ENCODE measurements at regions of chr7 and their contacts with region 1.

Region 1: GRCh38 chr7:148698397-148699023 is at the start of gene CUL1:
- DNase-seq: peak; percentile 66
- ATAC-seq: peak; percentile 77
- H3K4me3 ChIP-seq: peak within 1 kb of the TSS; percentile 81
- H3K27ac ChIP-seq: peak within 1 kb of the TSS; percentile 65
- H3K4me1 ChIP-seq: peaks cover 33% of the 10 kb centered on the region
- H3K27me3 ChIP-seq: no peaks in the 10 kb centered on the region
- CTCF ChIP-seq: no peak
- total RNA-seq, gene CUL1: 38.0 and 43.6 TPM in 2 replicates

Region 2: DNA sequence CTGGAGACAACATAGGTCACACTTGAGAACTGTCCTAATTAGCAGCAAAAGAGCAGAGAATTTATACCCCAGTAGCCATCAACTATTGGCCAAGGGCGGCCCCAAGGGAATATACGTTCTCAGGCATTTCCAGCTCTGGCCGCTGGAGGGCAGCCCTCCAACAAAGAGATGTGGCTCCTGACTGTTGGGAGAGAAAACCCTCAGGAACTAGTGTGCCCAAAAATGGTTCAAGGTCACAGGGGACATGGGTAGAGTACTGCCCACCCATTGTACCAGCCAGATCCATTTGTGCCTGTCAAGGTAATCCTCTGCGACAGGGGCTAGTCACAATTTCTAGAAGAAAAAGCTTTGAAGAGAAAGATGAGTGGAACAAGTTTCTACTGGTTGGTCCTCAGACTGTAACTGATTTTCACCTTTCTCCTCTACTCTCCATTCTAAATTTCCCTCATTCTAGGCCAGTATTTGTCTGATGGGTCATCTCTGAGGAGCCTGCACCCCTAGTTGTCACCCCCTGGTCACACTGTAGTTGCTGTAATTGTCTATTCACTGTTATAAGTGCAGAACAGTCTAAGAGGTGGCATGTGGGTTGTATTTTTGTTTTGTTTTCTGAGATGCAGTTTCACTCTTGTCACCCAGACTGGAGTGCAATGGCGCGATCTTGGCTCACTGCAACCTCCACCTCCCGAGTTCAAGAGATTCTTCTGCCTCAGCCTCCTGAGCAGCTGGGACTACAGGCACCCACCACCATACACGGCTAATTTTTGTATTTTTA is 122.7 kb before region 1 on chr7:
- CTCF ChIA-PET with region 1: interaction called, 4 read pairs
- POLR2A ChIA-PET with region 1: no interaction called
- intact Hi-C with region 1: loop called (anchors 2 kb)
- DNase-seq: peak; percentile 71
- ATAC-seq: peak; percentile 90
- H3K4me3 ChIP-seq: no peak overlapping the region
- H3K27ac ChIP-seq: no peak overlapping the region
- H3K4me1 ChIP-seq: no peaks in the 10 kb centered on the region
- H3K27me3 ChIP-seq: no peaks in the 10 kb centered on the region
- CTCF ChIP-seq: peak; percentile 85

Region 3: GRCh38 chr7:148650232-148650858 is 48.2 kb before region 1 on chr7:
- CTCF ChIA-PET with region 1: no interaction called
- POLR2A ChIA-PET with region 1: no interaction called
- intact Hi-C with region 1: loop called (anchors 5 kb)
- DNase-seq: peak; percentile 76
- ATAC-seq: peak; percentile 93
- H3K4me3 ChIP-seq: no peak overlapping the region
- H3K27ac ChIP-seq: peak overlapping the region; percentile 31; the same call in 1 of the 2 replicates
- H3K4me1 ChIP-seq: peaks cover 12% of the 10 kb centered on the region; the same call in 1 of the 2 replicates
- H3K27me3 ChIP-seq: peaks cover 2% of the 10 kb centered on the region; the same call in 1 of the 2 replicates
- CTCF ChIP-seq: no peak

Region 4: GRCh38 chr7:148773334-148773733 is 74.8 kb after region 1 on chr7:
- CTCF ChIA-PET with region 1: no interaction called
- POLR2A ChIA-PET with region 1: no interaction called
- intact Hi-C with region 1: loop called (anchors 5 kb)
- DNase-seq: no peak
- ATAC-seq: no peak
- H3K4me3 ChIP-seq: no peak overlapping the region
- H3K27ac ChIP-seq: peak overlapping the region; percentile 57
- H3K4me1 ChIP-seq: peaks cover 17% of the 10 kb centered on the region
- H3K27me3 ChIP-seq: no peaks in the 10 kb centered on the region
- CTCF ChIP-seq: no peak

Region 5: GRCh38 chr7:148884299-148885022 is 186.0 kb after region 1 on chr7:
- CTCF ChIA-PET with region 1: no interaction called
- POLR2A ChIA-PET with region 1: no interaction called
- intact Hi-C with region 1: loop called (anchors 5 kb)
- DNase-seq: peak; percentile 92
- ATAC-seq: peak; percentile 91
- H3K4me3 ChIP-seq: peak overlapping the region; percentile 80
- H3K27ac ChIP-seq: peak overlapping the region; percentile 81
- H3K4me1 ChIP-seq: peaks cover 20% of the 10 kb centered on the region
- H3K27me3 ChIP-seq: no peaks in the 10 kb centered on the region
- CTCF ChIP-seq: no peak

Region 6: DNA sequence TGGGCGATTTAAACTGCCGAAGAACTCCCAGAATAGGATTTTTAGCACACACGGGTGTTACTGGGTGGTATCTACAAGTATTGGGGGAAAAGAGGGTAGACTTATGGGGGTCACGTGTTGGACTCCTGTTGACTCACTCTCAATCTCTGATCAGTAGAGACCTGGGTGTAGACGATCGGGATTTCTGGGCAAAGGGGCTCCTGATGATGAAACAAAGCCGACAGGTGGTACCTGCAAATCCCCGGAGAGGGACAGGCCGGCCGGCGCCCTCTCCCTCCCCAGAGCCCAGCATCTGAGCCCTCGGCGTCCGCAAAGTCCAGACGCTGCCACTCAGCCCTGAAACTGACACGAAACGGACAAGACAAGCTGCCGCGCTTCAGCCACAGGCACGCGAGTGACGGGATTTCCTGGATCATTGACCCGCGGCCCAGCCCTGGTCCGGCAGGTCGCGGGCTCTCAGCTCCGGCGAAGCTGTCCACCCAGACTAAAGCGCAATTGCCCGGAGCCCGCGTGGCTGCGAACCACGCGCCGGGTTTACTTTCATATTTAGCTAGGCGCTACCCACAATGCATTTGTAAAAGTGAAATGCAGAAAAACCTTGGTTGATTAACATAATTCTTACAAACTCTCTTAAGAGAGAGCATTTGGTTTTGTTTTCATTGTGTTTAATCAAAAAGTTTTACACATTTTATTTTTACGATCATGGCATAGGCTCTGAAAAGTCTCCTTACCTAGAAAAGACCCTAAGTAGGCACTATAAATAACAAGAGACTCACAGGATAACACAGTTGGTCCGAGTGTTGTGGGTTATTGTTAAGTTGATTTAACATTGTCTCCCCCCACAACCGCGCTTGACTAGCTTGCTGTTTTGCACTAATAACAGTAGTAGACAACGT is 242.4 kb after region 1 on chr7:
- CTCF ChIA-PET with region 1: no interaction called
- POLR2A ChIA-PET with region 1: no interaction called
- intact Hi-C with region 1: loop called (anchors 5 kb)
- DNase-seq: peak; percentile 71
- ATAC-seq: peak; percentile 76
- H3K4me3 ChIP-seq: peak overlapping the region; percentile 76
- H3K27ac ChIP-seq: peak overlapping the region; percentile 73
- H3K4me1 ChIP-seq: peaks cover 12% of the 10 kb centered on the region
- H3K27me3 ChIP-seq: no peaks in the 10 kb centered on the region
- CTCF ChIP-seq: no peak

Region 7: GRCh38 chr7:149005241-149006050 is 306.9 kb after region 1 on chr7:
- CTCF ChIA-PET with region 1: no interaction called
- POLR2A ChIA-PET with region 1: interaction called, 16 read pairs
- intact Hi-C with region 1: no loop called
- DNase-seq: peak; percentile 50
- ATAC-seq: peak; percentile 39
- H3K4me3 ChIP-seq: no peak overlapping the region
- H3K27ac ChIP-seq: no peak overlapping the region
- H3K4me1 ChIP-seq: no peaks in the 10 kb centered on the region
- H3K27me3 ChIP-seq: no peaks in the 10 kb centered on the region
- CTCF ChIP-seq: peak; percentile 83